CD14-positive monocyte (primary cell): ENCODE measurements at regions of chr17 and their contacts with region 1.

Region 1: DNA sequence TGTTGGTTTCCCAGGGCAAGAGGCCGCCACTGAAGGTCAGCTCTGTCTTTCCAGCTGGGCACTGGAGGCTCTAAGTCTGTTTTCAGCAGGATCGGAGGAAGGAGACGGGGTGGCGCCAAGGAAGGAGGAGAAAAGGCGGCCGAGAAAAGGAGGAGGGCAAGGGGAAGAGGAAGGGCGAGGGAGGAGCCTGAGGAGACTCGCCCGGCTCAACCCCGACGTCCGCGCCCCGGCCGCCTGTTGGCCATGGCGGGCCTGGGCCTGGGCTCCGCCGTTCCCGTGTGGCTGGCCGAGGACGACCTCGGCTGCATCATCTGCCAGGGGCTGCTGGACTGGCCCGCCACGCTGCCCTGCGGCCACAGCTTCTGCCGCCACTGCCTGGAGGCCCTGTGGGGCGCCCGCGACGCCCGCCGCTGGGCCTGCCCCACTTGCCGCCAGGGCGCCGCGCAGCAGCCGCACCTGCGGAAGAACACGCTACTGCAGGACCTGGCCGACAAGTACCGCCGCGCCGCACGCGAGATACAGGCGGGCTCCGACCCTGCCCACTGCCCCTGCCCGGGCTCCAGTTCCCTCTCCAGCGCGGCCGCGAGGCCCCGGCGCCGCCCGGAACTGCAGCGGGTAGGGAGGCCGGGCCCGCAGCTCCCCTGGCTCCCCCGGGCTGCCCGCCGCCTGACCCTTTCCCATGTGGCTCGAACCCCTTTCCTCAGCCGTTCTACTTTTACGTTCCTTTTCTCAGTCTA is at the start of gene RNF135:
- DNase-seq: peak; percentile 66 to 76 (median 71)
- H3K4me3 ChIP-seq: peak within 1 kb of the TSS; percentile 62 to 82 (median 80)
- H3K4me3 Mint-ChIP-seq: peak within 1 kb of the TSS; percentile 99 to 100
- H3K27ac ChIP-seq: peak within 1 kb of the TSS; percentile 87 to 95
- H3K27ac Mint-ChIP-seq: peak within 1 kb of the TSS; percentile 98 to 99 (median 99)
- H3K4me1 ChIP-seq: peaks cover 47 to 66% of the 10 kb centered on the region in 2 donors
- H3K4me1 Mint-ChIP-seq: peaks cover 58% of the 10 kb centered on the region
- H3K27me3 ChIP-seq: no peaks in the 10 kb centered on the region
- H3K27me3 Mint-ChIP-seq: peaks cover 0 to 1% (median 0%) of the 10 kb centered on the region in 3 donors
- CTCF ChIP-seq: peak; percentile 61
- polyA plus RNA-seq, gene RNF135: 51.4 to 74.8 (median 66.6) TPM

Region 2: DNA sequence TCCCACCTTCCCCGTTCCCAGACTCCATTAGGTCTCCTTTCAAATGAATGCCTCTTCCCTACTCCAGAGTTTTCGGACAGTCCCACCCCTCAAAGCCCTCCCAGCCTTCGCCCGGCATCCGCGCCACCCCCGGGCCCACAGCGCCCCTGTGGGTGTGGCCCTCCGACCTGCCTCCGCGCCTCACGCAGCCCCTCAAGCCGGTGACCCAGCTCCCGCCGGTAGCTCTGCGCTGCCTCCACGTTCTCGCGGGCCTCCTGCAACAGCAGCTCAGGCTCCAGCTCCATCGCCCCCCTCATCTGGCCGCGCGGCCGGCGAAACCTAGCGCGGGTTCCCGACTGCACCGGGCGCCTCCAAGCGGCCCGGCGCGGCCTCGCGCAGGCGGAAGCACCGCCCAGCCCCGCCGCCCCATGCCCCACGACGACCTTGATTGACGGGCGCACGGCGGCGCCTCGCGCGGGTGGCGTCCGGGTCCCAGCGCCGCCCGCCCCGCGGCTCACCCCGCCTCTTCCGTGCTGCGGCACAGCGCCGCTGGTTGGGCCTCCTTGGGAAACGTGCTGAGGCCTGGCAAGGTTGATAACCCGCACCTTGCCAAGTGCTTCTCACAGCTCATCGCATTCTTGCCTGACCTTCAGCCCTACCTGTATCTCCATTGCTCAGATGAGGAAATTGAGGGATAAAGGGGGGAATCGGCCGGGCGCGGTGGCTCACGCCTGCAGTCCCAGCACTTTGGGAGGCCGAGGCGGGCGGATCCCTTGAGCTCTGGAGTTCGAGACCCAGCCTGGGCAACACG is 146.4 kb before region 1 on chr17 and contains the start of gene CRLF3:
- intact Hi-C with region 1: loop called in 1 of 2 experiments (anchors 5 kb)
- DNase-seq: peak; percentile 81 to 85 (median 84)
- H3K4me3 ChIP-seq: peak within 1 kb of the TSS; percentile 85 to 96 (median 94)
- H3K4me3 Mint-ChIP-seq: peak within 1 kb of the TSS; percentile 98
- H3K27ac ChIP-seq: peak within 1 kb of the TSS; percentile 47 to 87
- H3K27ac Mint-ChIP-seq: peak within 1 kb of the TSS; percentile 82 to 97 (median 89)
- H3K4me1 ChIP-seq: peaks cover 36 to 44% of the 10 kb centered on the region in 2 donors
- H3K4me1 Mint-ChIP-seq: peaks cover 39% of the 10 kb centered on the region
- H3K27me3 ChIP-seq: no peaks in the 10 kb centered on the region
- H3K27me3 Mint-ChIP-seq: peaks cover 0 to 1% (median 0%) of the 10 kb centered on the region in 3 donors
- CTCF ChIP-seq: peak; percentile 71
- polyA plus RNA-seq, gene CRLF3: 41.0 to 92.8 (median 88.5) TPM

Region 3: GRCh38 chr17:30921544-30922196 is 49.3 kb before region 1 on chr17 and contains the start of gene ADAP2:
- intact Hi-C with region 1: loop called (anchors 5 to 10 kb)
- DNase-seq: peak; percentile 56 to 63 (median 61)
- H3K4me3 ChIP-seq: peak within 1 kb of the TSS; percentile 59 to 90 (median 83)
- H3K4me3 Mint-ChIP-seq: peak within 1 kb of the TSS; percentile 94 to 95
- H3K27ac ChIP-seq: peak within 1 kb of the TSS in 1 of 2 donors; percentile 72
- H3K27ac Mint-ChIP-seq: peak within 1 kb of the TSS; percentile 72 to 92 (median 86)
- H3K4me1 ChIP-seq: peaks cover 23 to 46% of the 10 kb centered on the region in 2 donors
- H3K4me1 Mint-ChIP-seq: peaks cover 39% of the 10 kb centered on the region
- H3K27me3 ChIP-seq: no peaks in the 10 kb centered on the region
- H3K27me3 Mint-ChIP-seq: peaks cover 16 to 23% (median 16%) of the 10 kb centered on the region in 3 donors
- CTCF ChIP-seq: no peak
- polyA plus RNA-seq, gene ADAP2: 36.1 to 142 (median 39.8) TPM

Region 4: GRCh38 chr17:30939051-30939689 is 31.8 kb before region 1 on chr17:
- intact Hi-C with region 1: loop called in 1 of 2 experiments (anchors 5 kb)
- DNase-seq: no peak
- H3K4me3 ChIP-seq: no peak overlapping the region
- H3K4me3 Mint-ChIP-seq: peak overlapping the region in 1 of 2 donors; percentile 39
- H3K27ac ChIP-seq: peak overlapping the region; percentile 54 to 76
- H3K27ac Mint-ChIP-seq: peak overlapping the region; percentile 61 to 86 (median 79)
- H3K4me1 ChIP-seq: peaks cover 24 to 33% of the 10 kb centered on the region in 2 donors
- H3K4me1 Mint-ChIP-seq: peaks cover 25% of the 10 kb centered on the region
- H3K27me3 ChIP-seq: no peaks in the 10 kb centered on the region
- H3K27me3 Mint-ChIP-seq: peaks cover 0 to 1% (median 0%) of the 10 kb centered on the region in 3 donors
- CTCF ChIP-seq: no peak

Region 5: GRCh38 chr17:30950669-30951399 is 20.2 kb before region 1 on chr17:
- intact Hi-C with region 1: loop called (anchors 1 to 2 kb)
- DNase-seq: peak; percentile 73 to 77 (median 76)
- H3K4me3 ChIP-seq: peak overlapping the region in 1 of 3 experiments; percentile 18
- H3K4me3 Mint-ChIP-seq: peak overlapping the region in 1 of 2 donors; percentile 48
- H3K27ac ChIP-seq: peak overlapping the region; percentile 78 to 80
- H3K27ac Mint-ChIP-seq: peak overlapping the region; percentile 80 to 99 (median 90)
- H3K4me1 ChIP-seq: peaks cover 73% of the 10 kb centered on the region in 2 donors
- H3K4me1 Mint-ChIP-seq: peaks cover 64% of the 10 kb centered on the region
- H3K27me3 ChIP-seq: no peaks in the 10 kb centered on the region
- H3K27me3 Mint-ChIP-seq: peaks cover 0 to 5% (median 2%) of the 10 kb centered on the region in 3 donors
- CTCF ChIP-seq: no peak

Region 6: DNA sequence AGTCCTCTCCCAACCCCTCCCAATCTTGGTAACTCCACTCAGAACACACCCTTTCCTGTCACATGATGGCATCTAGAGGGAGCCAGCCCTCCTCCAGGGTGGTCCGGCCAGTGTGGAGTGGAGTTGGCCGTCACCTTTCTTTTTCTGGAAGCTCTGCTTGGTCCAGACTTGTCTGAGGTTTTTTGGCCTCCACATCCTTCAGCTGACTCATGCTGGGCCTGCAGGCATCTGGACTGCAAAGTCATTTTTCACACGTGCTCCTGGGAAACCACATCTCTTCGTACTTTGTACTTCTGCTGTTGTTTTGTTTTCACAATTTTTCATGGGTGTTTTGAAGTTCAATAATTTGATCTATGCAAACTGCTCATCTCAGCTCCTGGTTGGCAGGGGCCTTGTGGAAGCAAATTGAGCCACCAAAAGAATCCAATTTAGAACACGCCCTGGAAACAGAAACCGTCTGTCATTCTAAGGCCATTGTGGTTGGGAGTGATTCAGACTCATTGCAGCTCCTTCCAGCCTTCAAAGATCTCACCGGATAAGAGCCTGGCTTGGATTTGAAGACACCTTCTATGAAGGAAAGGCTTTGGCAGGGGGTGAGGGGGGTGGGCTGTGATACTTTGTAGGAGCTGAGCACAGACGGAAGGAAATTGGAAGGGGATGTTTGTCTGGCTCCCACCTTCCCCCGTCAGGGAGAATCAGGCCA is 81.3 kb after region 1 on chr17:
- intact Hi-C with region 1: loop called in 1 of 2 experiments (anchors 5 kb)
- DNase-seq: peak; percentile 67 to 82 (median 67)
- H3K4me3 ChIP-seq: peak overlapping the region in 1 of 3 experiments; percentile 29
- H3K4me3 Mint-ChIP-seq: peak overlapping the region; percentile 28 to 76
- H3K27ac ChIP-seq: peak overlapping the region; percentile 73 to 92
- H3K27ac Mint-ChIP-seq: peak overlapping the region; percentile 92 to 98 (median 96)
- H3K4me1 ChIP-seq: peaks cover 32 to 33% of the 10 kb centered on the region in 2 donors
- H3K4me1 Mint-ChIP-seq: peaks cover 31% of the 10 kb centered on the region
- H3K27me3 ChIP-seq: no peaks in the 10 kb centered on the region
- H3K27me3 Mint-ChIP-seq: no peaks in the 10 kb centered on the region
- CTCF ChIP-seq: no peak

Region 7: GRCh38 chr17:31096106-31096436 is 125.1 kb after region 1 on chr17:
- intact Hi-C with region 1: no loop called
- DNase-seq: no peak
- H3K4me3 ChIP-seq: peak overlapping the region; percentile 72 to 98 (median 87)
- H3K4me3 Mint-ChIP-seq: peak overlapping the region; percentile 96 to 97
- H3K27ac ChIP-seq: peak overlapping the region in 1 of 2 donors; percentile 82
- H3K27ac Mint-ChIP-seq: peak overlapping the region; percentile 80 to 91 (median 88)
- H3K4me1 ChIP-seq: peaks cover 13 to 17% of the 10 kb centered on the region in 2 donors
- H3K4me1 Mint-ChIP-seq: peaks cover 17% of the 10 kb centered on the region
- H3K27me3 ChIP-seq: no peaks in the 10 kb centered on the region
- H3K27me3 Mint-ChIP-seq: peaks cover 0 to 2% (median 0%) of the 10 kb centered on the region in 3 donors
- CTCF ChIP-seq: no peak